Astrocyte of the cerebellum (primary cell): ENCODE measurements at regions of chr18 and their contacts with region 1.

Region 1: DNA sequence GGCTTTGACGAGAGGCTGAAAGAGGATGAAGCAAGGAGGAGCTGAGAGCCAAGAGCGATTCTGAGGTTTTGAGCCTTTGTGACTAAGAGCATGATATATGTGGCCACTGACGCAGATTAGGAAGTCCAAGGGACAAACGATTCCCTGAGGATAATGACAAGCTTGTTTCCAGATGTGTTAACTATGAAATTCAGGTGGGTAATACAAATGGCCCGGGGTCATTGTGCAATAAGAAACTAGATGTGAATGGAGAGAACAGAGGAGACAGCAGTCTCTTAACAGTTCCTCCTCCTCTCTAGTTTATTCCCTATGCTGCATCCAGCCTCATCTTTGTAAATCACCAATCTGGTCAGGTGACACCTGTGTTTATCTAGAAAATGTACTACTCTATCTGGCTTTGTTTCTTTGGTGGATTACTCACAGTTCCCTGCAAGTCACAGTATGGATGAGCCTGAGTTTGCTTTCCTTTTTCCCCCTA is 84.2 kb downstream of the SOCS6 start:
- DNase-seq: peak; percentile 53
- H3K4me3 ChIP-seq: no peak overlapping the region
- CTCF ChIP-seq: no peak

Region 2: GRCh38 chr18:70293166-70293565 is 79.9 kb before region 1 on chr18:
- in situ Hi-C with region 1: no loop called
- DNase-seq: no peak
- H3K4me3 ChIP-seq: no peak overlapping the region
- CTCF ChIP-seq: no peak

Region 3: DNA sequence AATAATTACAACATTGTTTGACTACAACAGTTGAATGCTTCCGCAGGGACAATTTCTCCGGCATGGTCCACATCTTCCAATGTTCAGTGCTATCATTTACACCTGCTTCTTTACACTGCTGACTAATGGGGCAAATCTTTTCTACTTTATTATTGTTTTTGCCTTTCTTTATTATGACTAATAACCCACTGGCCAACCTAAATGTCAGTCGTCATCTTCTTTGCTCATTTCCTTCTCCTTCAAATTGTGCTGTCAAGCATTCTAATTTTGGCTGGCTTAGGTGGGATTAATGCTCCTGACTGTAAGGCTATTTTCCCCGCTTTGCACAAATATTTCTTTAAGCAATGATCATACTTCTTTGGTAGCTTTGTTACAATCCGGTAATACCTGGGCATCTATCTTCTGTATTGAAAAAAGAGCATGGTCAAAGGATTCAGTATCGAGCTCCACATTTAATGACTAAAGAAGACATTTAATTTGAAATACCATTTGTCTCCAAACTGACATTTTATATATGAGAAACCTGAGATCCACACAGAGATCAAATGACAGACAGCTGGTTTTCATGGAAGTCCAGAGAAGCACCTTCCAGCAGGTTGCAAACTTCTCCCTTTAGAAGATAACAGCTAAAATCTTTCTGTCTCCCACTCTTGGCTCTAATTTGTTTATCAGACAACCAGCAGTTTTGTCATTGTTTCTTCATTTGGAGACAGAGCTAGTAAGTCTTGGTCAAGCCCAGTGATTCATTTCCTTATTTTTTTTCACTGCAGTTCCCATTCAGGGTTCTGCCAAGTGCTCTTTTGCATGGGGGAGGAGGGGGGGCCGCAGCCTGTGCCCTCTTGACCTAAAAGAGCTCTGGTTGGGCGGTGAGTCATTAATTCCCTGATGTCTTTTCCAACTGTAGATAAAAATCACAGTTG is 48.6 kb after region 1 on chr18:
- in situ Hi-C with region 1: loop called (anchors 5 kb)
- DNase-seq: peak; percentile 76
- H3K4me3 ChIP-seq: no peak overlapping the region
- CTCF ChIP-seq: no peak